Aorta (tissue), 5 donors: ENCODE measurements at regions of chr11 and their contacts with region 1.

Region 1: GRCh38 chr11:613369-614268 is 2.1 kb downstream of the IRF7 start:
- DNase-seq: peak in 1 of 2 donors; percentile 79
- ATAC-seq: no peak
- H3K4me3 ChIP-seq: no peak overlapping the region
- H3K27ac ChIP-seq: no peak overlapping the region
- H3K4me1 ChIP-seq: no peaks in the 10 kb centered on the region
- H3K27me3 ChIP-seq: no peaks in the 10 kb centered on the region

Region 2: GRCh38 chr11:575996-576768 is 37.4 kb before region 1 on chr11 and contains the start of gene PHRF1:
- intact Hi-C with region 1: loop called in 1 of 2 experiments (anchors 5 kb)
- DNase-seq: peak; percentile 97 to 98
- ATAC-seq: peak; percentile 97
- H3K4me3 ChIP-seq: peak within 1 kb of the TSS; percentile 67 to 69
- H3K27ac ChIP-seq: peak within 1 kb of the TSS in 1 of 2 donors; percentile 49
- H3K4me1 ChIP-seq: no peaks in the 10 kb centered on the region
- H3K27me3 ChIP-seq: no peaks in the 10 kb centered on the region
- total RNA-seq, gene PHRF1: 26.6 to 32.4 TPM